CD14-positive monocyte (primary cell): ENCODE measurements at regions of chr6 and their contacts with region 1.

Region 1: GRCh38 chr6:168370310-168370991 is 50.9 kb upstream of the DACT2 start:
- DNase-seq: no peak
- H3K4me3 ChIP-seq: no peak overlapping the region
- H3K4me3 Mint-ChIP-seq: no peak overlapping the region
- H3K27ac ChIP-seq: no peak overlapping the region
- H3K27ac Mint-ChIP-seq: peak overlapping the region in 1 of 7 donors; percentile 74
- H3K4me1 ChIP-seq: no peaks in the 10 kb centered on the region
- H3K4me1 Mint-ChIP-seq: no peaks in the 10 kb centered on the region
- H3K27me3 ChIP-seq: no peaks in the 10 kb centered on the region
- H3K27me3 Mint-ChIP-seq: peaks cover 6 to 18% (median 9%) of the 10 kb centered on the region in 3 donors
- CTCF ChIP-seq: peak; percentile 40

Region 2: GRCh38 chr6:167881327-167881726 is 489.1 kb before region 1 on chr6:
- intact Hi-C with region 1: no loop called
- DNase-seq: no peak
- H3K4me3 ChIP-seq: no peak overlapping the region
- H3K4me3 Mint-ChIP-seq: no peak overlapping the region
- H3K27ac ChIP-seq: no peak overlapping the region
- H3K27ac Mint-ChIP-seq: no peak overlapping the region
- H3K4me1 ChIP-seq: no peaks in the 10 kb centered on the region
- H3K4me1 Mint-ChIP-seq: no peaks in the 10 kb centered on the region
- H3K27me3 ChIP-seq: no peaks in the 10 kb centered on the region
- H3K27me3 Mint-ChIP-seq: peaks cover 2 to 9% (median 9%) of the 10 kb centered on the region in 3 donors
- CTCF ChIP-seq: no peak

Region 3: GRCh38 chr6:168326294-168327261 is 43.9 kb before region 1 on chr6:
- intact Hi-C with region 1: no loop called
- DNase-seq: no peak
- H3K4me3 ChIP-seq: no peak overlapping the region
- H3K4me3 Mint-ChIP-seq: no peak overlapping the region
- H3K27ac ChIP-seq: no peak overlapping the region
- H3K27ac Mint-ChIP-seq: peak overlapping the region in 1 of 7 donors; percentile 47
- H3K4me1 ChIP-seq: no peaks in the 10 kb centered on the region
- H3K4me1 Mint-ChIP-seq: no peaks in the 10 kb centered on the region
- H3K27me3 ChIP-seq: no peaks in the 10 kb centered on the region
- H3K27me3 Mint-ChIP-seq: peaks cover 2 to 4% (median 2%) of the 10 kb centered on the region in 3 donors
- CTCF ChIP-seq: no peak

Region 4: DNA sequence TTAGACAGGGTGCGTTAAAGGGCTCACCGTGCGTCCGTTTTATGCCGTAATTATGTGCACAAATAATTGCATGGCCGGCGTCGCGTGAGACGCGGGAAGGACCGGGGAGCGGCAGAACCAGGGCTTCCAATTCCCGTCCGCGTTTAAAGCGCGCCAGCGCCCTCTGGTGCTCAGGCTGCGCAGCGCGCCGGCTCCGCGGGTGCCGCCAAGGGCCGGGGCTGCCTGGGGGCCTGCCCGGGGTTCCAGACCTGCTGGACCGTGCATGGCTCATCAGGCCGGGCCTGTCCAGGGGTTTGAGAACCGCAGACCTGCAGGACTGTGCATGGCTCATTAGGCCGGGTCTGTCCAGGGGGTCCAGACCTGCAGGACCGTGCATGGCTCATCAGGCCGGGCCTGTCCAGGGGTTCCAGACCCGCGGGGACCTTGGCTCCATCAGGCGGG is 514.2 kb after region 1 on chr6:
- intact Hi-C with region 1: loop called in 1 of 2 experiments (anchors 10 kb)
- DNase-seq: peak; percentile 24 to 37 (median 35)
- H3K4me3 ChIP-seq: peak overlapping the region; percentile 24 to 74 (median 44)
- H3K4me3 Mint-ChIP-seq: peak overlapping the region; percentile 82 to 92
- H3K27ac ChIP-seq: no peak overlapping the region
- H3K27ac Mint-ChIP-seq: peak overlapping the region in 2 of 7 donors; percentile 22 to 37
- H3K4me1 ChIP-seq: no peaks in the 10 kb centered on the region
- H3K4me1 Mint-ChIP-seq: peaks cover 7% of the 10 kb centered on the region
- H3K27me3 ChIP-seq: peaks cover 0 to 6% of the 10 kb centered on the region in 2 donors
- H3K27me3 Mint-ChIP-seq: peaks cover 0 to 9% (median 4%) of the 10 kb centered on the region in 3 donors
- CTCF ChIP-seq: peak; percentile 94